Right ventricle myocardium superior (tissue), 1 donor: ENCODE measurements at regions of chr12 and their contacts with region 1.

Region 1: GRCh38 chr12:25250744-25251730 is at the start of gene KRAS:
- DNase-seq: peak; percentile 98
- ATAC-seq: peak; percentile 97
- total RNA-seq, gene KRAS: 9.7 TPM

Region 2: GRCh38 chr12:25195056-25195971 is 55.7 kb before region 1 on chr12 and contains the starts of genes DNAI7 and ETFRF1:
- intact Hi-C with region 1: loop called (anchors 2 kb)
- DNase-seq: peak; percentile 100
- ATAC-seq: peak; percentile 100
- total RNA-seq, gene DNAI7: 1.7 TPM
- total RNA-seq, gene ETFRF1: 69.4 TPM

Region 3: GRCh38 chr12:25328072-25328712 is 77.2 kb after region 1 on chr12:
- intact Hi-C with region 1: no loop called
- DNase-seq: no peak
- ATAC-seq: no peak